ENCODE measurements at regions of chr4 and their contacts with region 1.

Region 1: GRCh38 chr4:128454281-128455075 is 166.9 kb upstream of the PGRMC2 start:
- DNase-seq: peak; percentile 69 to 76
- H3K4me3 ChIP-seq: peak overlapping the region in 1 of 3 donors; percentile 17
- H3K27ac ChIP-seq: peak overlapping the region in 1 of 2 donors; percentile 4
- H3K4me1 ChIP-seq: no peaks in the 10 kb centered on the region
- H3K27me3 ChIP-seq: no peaks in the 10 kb centered on the region
- CTCF ChIP-seq: peak; percentile 47 to 81 (median 81)
- POLR2A ChIP-seq: no peak

Region 2: DNA sequence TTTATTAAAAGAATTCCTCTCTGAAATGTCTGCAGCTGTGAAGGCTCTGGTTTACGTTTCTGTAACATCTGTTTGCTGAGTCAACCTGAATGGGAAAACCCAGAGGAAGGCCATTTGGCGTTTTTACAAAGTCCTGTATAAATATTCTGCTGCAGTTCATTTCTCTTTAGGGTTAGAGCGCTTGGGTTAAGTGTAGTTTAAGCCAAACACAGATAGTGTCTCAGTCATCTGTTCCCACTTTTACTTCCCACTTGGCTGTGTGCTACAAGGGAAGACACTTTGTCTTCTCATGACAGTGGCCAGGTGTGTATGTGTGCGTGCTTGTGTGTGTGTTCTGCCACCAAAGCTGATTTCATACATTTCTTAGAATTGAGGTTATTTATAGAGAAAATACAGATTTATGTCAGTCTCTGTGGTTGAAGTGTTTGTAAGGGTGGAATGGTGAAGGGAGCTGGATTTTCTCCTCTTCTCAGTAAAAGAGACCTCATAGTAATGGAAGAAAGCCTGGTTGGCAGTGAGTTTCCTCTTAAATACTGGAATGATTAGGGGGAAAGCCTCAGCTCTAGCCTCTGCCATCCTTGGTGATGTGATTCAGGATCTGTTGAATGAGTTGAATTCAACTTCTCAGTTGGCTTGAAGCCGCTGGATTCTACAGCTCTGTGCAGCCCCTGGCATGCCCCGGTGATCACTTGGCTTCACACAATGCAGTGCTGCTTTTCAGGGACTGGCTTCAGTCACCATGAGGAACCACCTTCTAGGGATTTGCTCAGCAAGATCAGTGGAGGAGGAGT is 405.6 kb after region 1 on chr4:
- intact Hi-C with region 1: loop called (anchors 1 kb)
- DNase-seq: no peak
- H3K4me3 ChIP-seq: no peak overlapping the region
- H3K27ac ChIP-seq: no peak overlapping the region
- H3K4me1 ChIP-seq: no peaks in the 10 kb centered on the region
- H3K27me3 ChIP-seq: no peaks in the 10 kb centered on the region
- CTCF ChIP-seq: no peak
- POLR2A ChIP-seq: no peak

Measured in breast epithelium (tissue), 4 donors.